WTC11 (cell line): ENCODE measurements at regions of chr11 and their contacts with region 1.

Region 1: GRCh38 chr11:44775366-44775984 is 48.7 kb downstream of the TSPAN18 start:
- DNase-seq: peak; percentile 78
- ATAC-seq: peak; percentile 76
- H3K4me3 Mint-ChIP-seq: no peak overlapping the region
- H3K27ac Mint-ChIP-seq: peak overlapping the region; percentile 30; the same call in 1 of the 2 replicates
- H3K4me1 Mint-ChIP-seq: peaks cover 71% of the 10 kb centered on the region
- H3K27me3 Mint-ChIP-seq: no peaks in the 10 kb centered on the region; the same call in 1 of the 2 replicates
- CTCF ChIP-seq: peak; percentile 82

Region 2: GRCh38 chr11:44727373-44728287 is 47.8 kb before region 1 on chr11:
- CTCF ChIA-PET with region 1: interaction called, 11 read pairs
- POLR2A ChIA-PET with region 1: interaction called, 3 read pairs
- DNase-seq: peak; percentile 86
- ATAC-seq: peak; percentile 58
- H3K4me3 Mint-ChIP-seq: peak overlapping the region; percentile 78
- H3K27ac Mint-ChIP-seq: no peak overlapping the region
- H3K4me1 Mint-ChIP-seq: peaks cover 57% of the 10 kb centered on the region
- H3K27me3 Mint-ChIP-seq: peaks cover 75% of the 10 kb centered on the region
- CTCF ChIP-seq: peak; percentile 97

Region 3: GRCh38 chr11:44760917-44761550 is 14.4 kb before region 1 on chr11:
- CTCF ChIA-PET with region 1: interaction called, 21 read pairs
- POLR2A ChIA-PET with region 1: no interaction called
- DNase-seq: peak; percentile 66
- ATAC-seq: peak; percentile 94
- H3K4me3 Mint-ChIP-seq: no peak overlapping the region
- H3K27ac Mint-ChIP-seq: 0 out of 2 replicates have a peak overlapping the region, but pooled peaks have one; percentile 3
- H3K4me1 Mint-ChIP-seq: peaks cover 48% of the 10 kb centered on the region
- H3K27me3 Mint-ChIP-seq: peaks cover 17% of the 10 kb centered on the region
- CTCF ChIP-seq: peak; percentile 57

Region 4: DNA sequence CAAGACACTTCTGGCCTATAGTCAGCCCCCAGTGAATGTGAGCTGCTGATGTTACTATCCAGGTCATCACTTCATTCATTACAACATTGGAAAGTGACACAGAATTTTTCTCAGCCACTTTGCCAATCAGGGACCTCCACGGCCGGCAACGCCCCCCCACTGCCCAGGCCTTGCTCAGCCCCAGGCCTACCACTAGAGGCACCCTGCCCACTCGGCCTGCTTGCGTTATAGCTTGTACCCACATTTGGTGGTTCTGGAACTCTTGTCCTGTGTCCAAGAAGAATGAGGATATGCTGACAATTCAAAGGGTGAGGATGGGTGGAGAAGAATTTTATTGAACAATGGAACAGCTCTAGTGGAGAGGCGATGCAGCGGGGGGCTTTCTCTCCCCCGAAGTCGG is 47.5 kb after region 1 on chr11:
- CTCF ChIA-PET with region 1: interaction called, 28 read pairs
- POLR2A ChIA-PET with region 1: interaction called, 4 read pairs
- DNase-seq: peak; percentile 51
- ATAC-seq: peak; percentile 18
- H3K4me3 Mint-ChIP-seq: no peak overlapping the region
- H3K27ac Mint-ChIP-seq: no peak overlapping the region
- H3K4me1 Mint-ChIP-seq: peaks cover 41% of the 10 kb centered on the region
- H3K27me3 Mint-ChIP-seq: peaks cover 23% of the 10 kb centered on the region
- CTCF ChIP-seq: no peak

Region 5: DNA sequence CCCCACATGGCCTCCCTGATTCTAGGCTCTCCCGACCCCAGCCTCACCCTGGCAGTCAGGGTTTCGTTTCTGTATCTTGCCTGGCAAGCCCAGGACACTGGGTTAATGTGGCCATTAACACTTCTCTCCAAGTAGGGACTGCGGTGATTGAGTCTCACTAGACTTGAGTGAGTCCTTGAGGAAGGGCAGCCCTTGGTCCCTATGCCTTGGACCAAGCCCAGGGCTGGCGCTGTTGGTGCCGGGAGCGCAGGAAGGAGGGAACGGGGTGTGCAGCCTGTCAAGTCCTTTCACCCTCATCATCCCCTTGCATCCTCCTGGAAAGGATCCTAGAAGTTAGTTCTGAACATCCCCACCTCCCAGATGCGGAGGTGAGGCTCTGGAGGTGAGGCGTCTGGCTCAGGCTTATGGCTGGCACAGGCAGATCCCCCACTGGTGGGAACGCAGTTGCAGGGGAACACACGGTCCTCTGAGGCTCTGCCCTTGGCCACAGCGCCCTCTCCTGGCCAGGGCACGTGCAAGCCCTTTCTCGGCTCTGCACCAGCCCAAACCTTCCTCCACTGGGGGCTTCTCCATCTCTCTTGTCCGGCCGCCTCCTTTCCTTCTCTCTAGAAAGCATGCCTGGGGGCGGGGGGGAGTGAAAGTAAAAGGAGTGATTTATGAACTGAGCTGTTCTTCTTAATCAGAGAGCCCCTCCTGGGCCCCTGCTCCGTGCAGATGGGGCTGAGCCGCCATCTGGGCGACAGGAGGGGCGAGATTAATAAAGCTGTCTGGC is 118.6 kb after region 1 on chr11:
- CTCF ChIA-PET with region 1: interaction called, 17 read pairs
- POLR2A ChIA-PET with region 1: no interaction called
- DNase-seq: peak; percentile 92
- ATAC-seq: peak; percentile 93
- H3K4me3 Mint-ChIP-seq: no peak overlapping the region
- H3K27ac Mint-ChIP-seq: no peak overlapping the region
- H3K4me1 Mint-ChIP-seq: peaks cover 31% of the 10 kb centered on the region
- H3K27me3 Mint-ChIP-seq: no peaks in the 10 kb centered on the region
- CTCF ChIP-seq: peak; percentile 95